ENCODE measurements at regions of chr12 and their contacts with region 1.

Region 1: GRCh38 chr12:56688129-56688845 is at the start of gene PTGES3:
- DNase-seq: peak; percentile 97 to 99 (median 98)
- ATAC-seq: peak; percentile 93 to 96 (median 94)
- H3K4me3 ChIP-seq: peak within 1 kb of the TSS; percentile 63 to 96 (median 86)
- H3K27ac ChIP-seq: peak within 1 kb of the TSS; percentile 93 to 100 (median 98)
- H3K4me1 ChIP-seq: peaks cover 0 to 43% (median 33%) of the 10 kb centered on the region in 12 donors
- H3K27me3 ChIP-seq: no peaks in the 10 kb centered on the region
- CTCF ChIP-seq: no peak
- POLR2A ChIP-seq: peak in 1 of 2 donors; percentile 91
- total RNA-seq, gene PTGES3: 48.0 to 120 (median 103) TPM

Region 2: GRCh38 chr12:56645717-56646446 is 42.4 kb before region 1 on chr12 and contains the start of gene ATP5F1B:
- intact Hi-C with region 1: loop called in 7 of 10 experiments (anchors 1 to 5 kb)
- DNase-seq: peak; percentile 94 to 99 (median 98)
- ATAC-seq: peak; percentile 97 to 99 (median 98)
- H3K4me3 ChIP-seq: peak within 1 kb of the TSS; percentile 75 to 99 (median 86)
- H3K27ac ChIP-seq: peak within 1 kb of the TSS; percentile 87 to 98 (median 96)
- H3K4me1 ChIP-seq: peaks cover 5 to 48% (median 38%) of the 10 kb centered on the region in 12 donors
- H3K27me3 ChIP-seq: no peaks in the 10 kb centered on the region
- CTCF ChIP-seq: peak in 1 of 12 donors; percentile 9
- POLR2A ChIP-seq: peak; percentile 90 to 98
- total RNA-seq, gene ATP5F1B: 1,755 to 3,502 (median 2,732) TPM

Region 3: GRCh38 chr12:56724972-56725722 is 36.9 kb after region 1 on chr12 and contains the start of gene NACA:
- intact Hi-C with region 1: loop called (anchors 1 to 5 kb)
- DNase-seq: peak; percentile 99 to 100 (median 99)
- ATAC-seq: peak; percentile 97 to 98 (median 97)
- H3K4me3 ChIP-seq: peak within 1 kb of the TSS; percentile 68 to 98 (median 82)
- H3K27ac ChIP-seq: peak within 1 kb of the TSS; percentile 79 to 97 (median 93)
- H3K4me1 ChIP-seq: peaks cover 9 to 54% (median 40%) of the 10 kb centered on the region in 12 donors
- H3K27me3 ChIP-seq: no peaks in the 10 kb centered on the region
- CTCF ChIP-seq: peak in 1 of 12 donors; percentile 15
- POLR2A ChIP-seq: peak in 1 of 2 donors; percentile 86
- total RNA-seq, gene NACA: 361 to 741 (median 537) TPM

Region 4: DNA sequence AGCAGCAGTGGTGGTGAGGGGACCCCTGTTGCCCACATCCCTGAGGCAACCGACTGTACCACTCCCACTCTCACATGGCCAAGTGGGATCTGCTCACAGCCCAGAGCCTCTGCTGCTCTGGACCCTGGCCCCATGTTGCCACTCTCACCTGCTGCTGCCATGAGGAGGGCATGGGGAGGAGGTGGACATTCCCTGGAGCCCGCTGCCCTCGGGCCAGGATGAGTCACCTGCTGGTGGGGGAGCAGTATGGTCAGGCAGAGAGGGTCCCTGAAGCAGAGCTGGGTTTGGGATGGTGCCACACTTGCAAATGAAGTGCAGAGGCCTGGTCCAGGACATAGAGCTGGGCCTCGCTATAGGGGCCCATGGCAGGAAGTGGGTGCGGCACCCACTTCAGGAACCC is 219.8 kb after region 1 on chr12:
- intact Hi-C with region 1: no loop called
- DNase-seq: no peak
- ATAC-seq: no peak
- H3K4me3 ChIP-seq: no peak overlapping the region
- H3K27ac ChIP-seq: no peak overlapping the region
- H3K4me1 ChIP-seq: no peaks in the 10 kb centered on the region
- H3K27me3 ChIP-seq: no peaks in the 10 kb centered on the region
- CTCF ChIP-seq: no peak
- POLR2A ChIP-seq: no peak